Mammary epithelial cell (primary cell): ENCODE measurements at regions of chr1 and their contacts with region 1.

Region 1: DNA sequence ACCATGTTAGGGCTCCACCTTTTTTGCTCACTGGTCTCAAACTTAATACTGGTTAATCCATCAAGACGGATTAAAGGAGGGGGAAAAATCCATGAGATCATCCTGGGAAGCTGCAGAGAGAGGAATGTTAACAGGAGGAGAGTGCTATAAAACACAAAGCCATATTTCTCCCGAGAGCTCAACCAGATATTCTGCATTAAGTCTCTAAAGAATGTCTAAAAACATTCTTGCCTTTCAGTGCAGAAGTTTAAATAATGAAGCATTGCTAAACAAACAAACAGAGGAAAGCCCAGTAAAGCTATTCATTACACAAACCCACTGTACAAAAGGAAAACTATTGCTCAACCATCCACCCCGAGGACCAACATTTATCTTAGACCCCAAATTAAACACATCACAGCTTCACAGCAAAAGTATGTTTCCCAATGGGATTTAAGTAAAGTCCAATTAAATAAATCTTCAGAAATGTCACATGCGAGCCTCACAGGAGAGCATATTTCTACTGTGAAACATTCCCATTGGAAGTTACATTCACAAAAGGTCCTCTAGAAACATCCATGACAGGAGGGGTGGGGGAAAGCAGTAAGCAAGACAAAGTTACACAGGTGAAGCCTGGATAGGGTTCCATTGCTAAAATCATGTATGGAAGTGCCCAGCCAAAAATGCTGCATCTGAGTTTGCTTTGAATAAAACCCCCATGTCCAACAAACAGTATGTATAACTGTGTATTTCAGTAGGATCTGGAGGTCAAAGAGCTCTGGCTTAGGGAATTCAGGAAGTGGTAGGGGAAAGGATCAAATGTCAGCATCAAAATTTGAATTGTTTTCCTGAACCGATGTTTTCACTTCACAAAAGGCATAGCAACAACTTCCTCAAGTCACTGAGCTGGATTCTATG is 23.3 kb downstream of the DUSP10 start:
- DNase-seq: no peak
- H3K4me3 ChIP-seq: no peak overlapping the region
- H3K27ac ChIP-seq: no peak overlapping the region
- H3K4me1 ChIP-seq: peaks cover 33% of the 10 kb centered on the region
- H3K27me3 ChIP-seq: no peaks in the 10 kb centered on the region
- CTCF ChIP-seq: no peak

Region 2: GRCh38 chr1:220690140-220691025 is 1028.2 kb before region 1 on chr1 and contains the start of gene C1orf115:
- CTCF ChIA-PET with region 1: interaction called, 10 read pairs
- dilution Hi-C with region 1: no loop called
- in situ Hi-C with region 1: no loop called
- intact Hi-C with region 1: no loop called
- DNase-seq: peak; percentile 70
- H3K4me3 ChIP-seq: peak within 1 kb of the TSS; percentile 40 to 72 (median 62)
- H3K27ac ChIP-seq: no peak within 1 kb of the TSS
- H3K4me1 ChIP-seq: no peaks in the 10 kb centered on the region
- H3K27me3 ChIP-seq: no peaks in the 10 kb centered on the region
- CTCF ChIP-seq: peak; percentile 64 to 98
- total RNA-seq, gene C1orf115: 0.83 to 1.3 TPM

Region 3: DNA sequence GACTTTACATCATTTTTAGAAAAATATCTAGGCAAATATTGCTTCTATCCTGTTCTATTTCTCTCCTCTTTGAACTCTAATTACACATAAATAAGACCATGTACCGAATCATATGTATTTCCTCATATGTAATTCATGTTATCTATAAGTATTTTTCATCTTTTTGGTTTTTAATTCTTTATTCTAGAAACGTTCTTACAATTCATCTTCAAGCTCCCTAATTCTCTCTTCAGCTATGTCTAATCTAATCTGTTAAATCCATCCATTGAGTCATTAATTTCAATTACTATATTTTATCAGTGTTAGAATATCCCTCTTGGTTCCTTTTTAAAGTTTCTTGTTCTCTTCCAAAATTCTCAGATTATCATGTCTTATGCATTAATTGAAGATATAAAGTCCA is 38.5 kb before region 1 on chr1:
- CTCF ChIA-PET with region 1: no interaction called
- dilution Hi-C with region 1: no loop called
- in situ Hi-C with region 1: no loop called
- intact Hi-C with region 1: no loop called
- DNase-seq: no peak
- H3K4me3 ChIP-seq: no peak overlapping the region
- H3K27ac ChIP-seq: no peak overlapping the region
- H3K4me1 ChIP-seq: peaks cover 2% of the 10 kb centered on the region
- H3K27me3 ChIP-seq: no peaks in the 10 kb centered on the region
- CTCF ChIP-seq: no peak